ENCODE measurements at regions of chr22 and their contacts with region 1.

Region 1: DNA sequence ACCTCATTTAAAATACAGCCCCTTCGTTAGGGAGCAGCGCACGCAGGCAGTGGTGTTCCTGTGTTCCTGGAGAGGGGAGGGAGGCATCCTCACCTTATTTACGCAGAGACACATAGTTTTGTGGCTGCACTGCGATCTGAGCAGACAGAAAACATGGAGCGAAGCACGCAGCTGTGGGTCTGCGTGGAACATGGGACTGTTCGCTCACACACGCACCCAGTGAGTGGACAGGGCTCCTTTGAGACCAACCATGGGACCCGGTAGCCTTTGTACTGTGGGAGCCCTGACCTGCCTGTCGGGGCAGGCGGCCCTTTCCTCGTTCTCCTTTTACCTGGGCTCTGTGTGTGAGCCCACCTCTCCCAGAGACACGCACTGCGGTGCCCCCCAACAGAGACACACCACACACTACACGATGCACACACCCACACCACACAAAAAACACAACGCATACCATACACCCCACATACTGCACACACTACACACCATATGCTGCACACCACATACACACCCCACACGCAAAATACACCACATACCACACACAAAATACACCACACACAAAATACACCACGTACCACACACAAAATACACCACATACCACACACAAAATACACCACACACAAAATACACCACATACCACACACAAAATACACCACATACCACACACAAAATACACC is 1245.7 kb downstream of the BRD1 start:
- DNase-seq: no peak
- H3K4me3 ChIP-seq: no peak overlapping the region
- H3K27ac ChIP-seq: peak overlapping the region in 3 of 59 donors; percentile 41 to 87 (median 52)
- H3K27me3 ChIP-seq: peaks cover 0 to 3% (median 0%) of the 10 kb centered on the region in 45 donors
- CTCF ChIP-seq: no peak

Region 2: DNA sequence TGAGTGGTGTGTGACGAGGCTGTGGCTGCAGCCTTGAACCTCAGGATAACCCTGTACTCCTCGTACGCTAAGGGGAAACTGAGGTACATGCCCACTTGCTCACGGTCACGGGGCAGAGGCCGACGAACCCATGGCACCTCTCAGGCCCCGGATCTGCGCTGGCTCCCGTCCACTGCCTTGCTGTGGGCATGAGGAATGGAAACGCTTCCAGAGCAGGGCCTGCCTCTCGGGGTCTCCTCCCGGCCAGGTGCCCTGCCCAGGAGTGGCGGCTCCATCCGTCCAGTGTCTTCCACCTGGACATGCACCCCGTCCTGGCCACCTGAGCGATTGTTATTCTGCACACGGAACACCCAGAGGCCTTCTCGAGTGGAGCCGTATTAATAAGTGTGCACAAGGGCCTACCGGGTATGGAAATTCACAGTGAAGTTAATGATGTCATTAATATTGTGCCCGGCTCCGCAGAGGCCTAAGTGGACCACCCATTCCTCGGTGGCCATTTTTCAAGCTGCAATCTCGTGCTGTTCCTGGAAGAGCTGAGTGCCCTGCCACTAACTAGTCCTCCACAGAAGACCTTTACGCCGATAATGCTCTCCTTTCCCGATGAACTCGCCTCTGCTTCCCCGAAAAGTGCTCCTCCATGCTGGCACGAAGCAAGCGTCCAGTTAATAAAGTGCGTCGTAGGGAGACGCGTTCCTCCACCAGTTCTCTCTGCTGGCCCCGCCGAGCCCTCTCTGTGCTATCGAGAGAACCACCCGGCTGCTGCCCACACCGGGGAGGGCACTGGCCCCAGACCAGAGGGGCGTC is 317.8 kb after region 1 on chr22:
- intact Hi-C with region 1: loop called in 1 of 2 experiments (anchors 10 kb)
- DNase-seq: peak in 2 of 10 donors; percentile 18 to 26
- H3K4me3 ChIP-seq: no peak overlapping the region
- H3K27ac ChIP-seq: no peak overlapping the region
- H3K27me3 ChIP-seq: no peaks in the 10 kb centered on the region
- CTCF ChIP-seq: no peak

Region 3: GRCh38 chr22:49724893-49725474 is 1143.1 kb after region 1 on chr22:
- intact Hi-C with region 1: loop called in 1 of 2 experiments (anchors 5 kb)
- DNase-seq: peak; percentile 45 to 83 (median 70)
- H3K4me3 ChIP-seq: peak overlapping the region in 57 of 59 donors; percentile 9 to 64 (median 44)
- H3K27ac ChIP-seq: no peak overlapping the region
- H3K27me3 ChIP-seq: peaks cover 0 to 54% (median 21%) of the 10 kb centered on the region in 45 donors
- CTCF ChIP-seq: peak in 54 of 56 donors; percentile 56 to 83 (median 74)